ENCODE measurements at regions of chr4 and their contacts with region 1.

Region 1: GRCh38 chr4:3304801-3305597 is 12.2 kb downstream of the RGS12 start:
- DNase-seq: no peak
- ATAC-seq: no peak
- H3K4me3 ChIP-seq: no peak overlapping the region
- H3K4me3 Mint-ChIP-seq: peak overlapping the region in 6 of 10 donors; percentile 13 to 67 (median 51)
- H3K27ac ChIP-seq: no peak overlapping the region
- H3K27ac Mint-ChIP-seq: peak overlapping the region in 7 of 9 donors; percentile 36 to 92 (median 67)
- H3K4me1 ChIP-seq: peaks cover 40 to 53% of the 10 kb centered on the region in 2 donors
- H3K4me1 Mint-ChIP-seq: peaks cover 43 to 84% (median 56%) of the 10 kb centered on the region in 7 donors
- H3K27me3 ChIP-seq: no peaks in the 10 kb centered on the region
- H3K27me3 Mint-ChIP-seq: peaks cover 0 to 39% (median 0%) of the 10 kb centered on the region in 5 donors

Region 2: DNA sequence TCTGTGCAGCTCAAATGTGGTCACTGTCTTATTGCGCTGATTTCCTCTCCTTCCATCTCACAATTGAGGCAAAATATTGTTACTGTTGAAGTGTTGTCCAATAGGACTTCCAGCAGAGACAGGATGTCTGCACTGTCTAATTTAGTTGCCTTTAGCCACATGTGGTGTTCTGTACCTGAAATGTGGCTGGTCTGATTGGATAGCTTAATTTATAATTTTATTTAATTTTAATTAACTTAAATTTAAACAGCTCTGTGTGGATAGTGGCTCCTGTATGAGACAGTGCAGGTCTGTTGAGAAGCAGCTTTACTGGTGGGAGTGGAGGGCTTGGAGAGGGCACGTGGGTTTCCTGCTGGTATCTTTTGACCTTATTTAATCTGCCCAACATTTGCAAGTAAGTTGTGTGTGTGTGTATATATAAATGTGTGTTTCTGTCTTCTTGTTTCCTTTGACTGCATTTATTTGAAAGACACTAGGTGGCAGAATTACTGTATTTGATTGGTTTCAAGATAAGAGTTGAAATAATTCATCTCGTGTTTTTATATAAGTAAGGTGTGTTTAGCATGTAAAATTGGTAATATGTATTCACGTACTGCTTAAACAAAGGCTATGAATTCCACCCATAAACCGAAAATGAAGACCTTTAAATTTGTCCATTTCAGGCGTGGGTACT is 111.3 kb before region 1 on chr4:
- CTCF ChIA-PET with region 1: interaction called, 5 read pairs
- POLR2A ChIA-PET with region 1: no interaction called
- intact Hi-C with region 1: loop called in 1 of 2 experiments (anchors 2 kb)
- DNase-seq: peak in 6 of 9 donors; percentile 32 to 57 (median 50)
- ATAC-seq: peak; percentile 42
- H3K4me3 ChIP-seq: no peak overlapping the region
- H3K4me3 Mint-ChIP-seq: peak overlapping the region in 5 of 10 donors; percentile 2 to 62 (median 19)
- H3K27ac ChIP-seq: no peak overlapping the region
- H3K27ac Mint-ChIP-seq: peak overlapping the region in 4 of 9 donors; percentile 2 to 49 (median 16)
- H3K4me1 ChIP-seq: peaks cover 42 to 72% of the 10 kb centered on the region in 2 donors
- H3K4me1 Mint-ChIP-seq: peaks cover 46 to 71% (median 62%) of the 10 kb centered on the region in 7 donors
- H3K27me3 ChIP-seq: no peaks in the 10 kb centered on the region
- H3K27me3 Mint-ChIP-seq: no peaks in the 10 kb centered on the region

Region 3: GRCh38 chr4:3241898-3242524 is 63.0 kb before region 1 on chr4:
- CTCF ChIA-PET with region 1: no interaction called
- POLR2A ChIA-PET with region 1: interaction called, 4 read pairs
- intact Hi-C with region 1: loop called in 1 of 2 experiments (anchors 5 kb)
- DNase-seq: no peak
- ATAC-seq: no peak
- H3K4me3 ChIP-seq: no peak overlapping the region
- H3K4me3 Mint-ChIP-seq: no peak overlapping the region
- H3K27ac ChIP-seq: no peak overlapping the region
- H3K27ac Mint-ChIP-seq: peak overlapping the region in 3 of 9 donors; percentile 11 to 38 (median 17)
- H3K4me1 ChIP-seq: peaks cover 3 to 4% of the 10 kb centered on the region in 2 donors
- H3K4me1 Mint-ChIP-seq: peaks cover 2 to 18% (median 15%) of the 10 kb centered on the region in 7 donors
- H3K27me3 ChIP-seq: no peaks in the 10 kb centered on the region
- H3K27me3 Mint-ChIP-seq: no peaks in the 10 kb centered on the region

Region 4: GRCh38 chr4:3346146-3346545 is 41.1 kb after region 1 on chr4:
- CTCF ChIA-PET with region 1: no interaction called
- POLR2A ChIA-PET with region 1: interaction called, 4 read pairs
- intact Hi-C with region 1: loop called in 1 of 2 experiments (anchors 1 kb)
- DNase-seq: peak in 7 of 9 donors; percentile 46 to 72 (median 63)
- ATAC-seq: peak; percentile 92
- H3K4me3 ChIP-seq: no peak overlapping the region
- H3K4me3 Mint-ChIP-seq: peak overlapping the region in 1 of 10 donors; percentile 1
- H3K27ac ChIP-seq: no peak overlapping the region
- H3K27ac Mint-ChIP-seq: peak overlapping the region in 1 of 9 donors; percentile 34
- H3K4me1 ChIP-seq: peaks cover 4 to 13% of the 10 kb centered on the region in 2 donors
- H3K4me1 Mint-ChIP-seq: peaks cover 8 to 40% (median 34%) of the 10 kb centered on the region in 7 donors
- H3K27me3 ChIP-seq: no peaks in the 10 kb centered on the region
- H3K27me3 Mint-ChIP-seq: no peaks in the 10 kb centered on the region

Region 5: GRCh38 chr4:3531879-3532713 is 227.1 kb after region 1 on chr4 and contains the start of gene LRPAP1:
- CTCF ChIA-PET with region 1: no interaction called
- POLR2A ChIA-PET with region 1: no interaction called
- intact Hi-C with region 1: loop called in 1 of 2 experiments (anchors 5 kb)
- DNase-seq: peak; percentile 69 to 92 (median 78)
- ATAC-seq: peak; percentile 96
- H3K4me3 ChIP-seq: peak within 1 kb of the TSS; percentile 83
- H3K4me3 Mint-ChIP-seq: peak within 1 kb of the TSS; percentile 95 to 100 (median 99)
- H3K27ac ChIP-seq: peak within 1 kb of the TSS; percentile 84
- H3K27ac Mint-ChIP-seq: peak within 1 kb of the TSS; percentile 91 to 99 (median 95)
- H3K4me1 ChIP-seq: peaks cover 16 to 32% of the 10 kb centered on the region in 2 donors
- H3K4me1 Mint-ChIP-seq: peaks cover 18 to 50% (median 39%) of the 10 kb centered on the region in 7 donors
- H3K27me3 ChIP-seq: no peaks in the 10 kb centered on the region
- H3K27me3 Mint-ChIP-seq: peaks cover 5 to 10% (median 6%) of the 10 kb centered on the region in 5 donors
- total RNA-seq, gene LRPAP1: 65.2 to 88.6 (median 79.4) TPM

Measured in naive thymus-derived CD4-positive, alpha-beta T cell (primary cell).